ENCODE measurements at regions of chr12 and their contacts with region 1.

Region 1: GRCh38 chr12:108731105-108731865 is at the start of gene CORO1C:
- DNase-seq: peak; percentile 84 to 98
- H3K4me3 ChIP-seq: peak within 1 kb of the TSS; percentile 66 to 79
- H3K27ac ChIP-seq: peak within 1 kb of the TSS; percentile 94 to 96
- H3K4me1 ChIP-seq: peaks cover 0 to 30% of the 10 kb centered on the region in 2 donors
- H3K27me3 ChIP-seq: no peaks in the 10 kb centered on the region
- CTCF ChIP-seq: peak; percentile 82 to 94 (median 83)
- total RNA-seq, gene CORO1C: 106 TPM

Region 2: DNA sequence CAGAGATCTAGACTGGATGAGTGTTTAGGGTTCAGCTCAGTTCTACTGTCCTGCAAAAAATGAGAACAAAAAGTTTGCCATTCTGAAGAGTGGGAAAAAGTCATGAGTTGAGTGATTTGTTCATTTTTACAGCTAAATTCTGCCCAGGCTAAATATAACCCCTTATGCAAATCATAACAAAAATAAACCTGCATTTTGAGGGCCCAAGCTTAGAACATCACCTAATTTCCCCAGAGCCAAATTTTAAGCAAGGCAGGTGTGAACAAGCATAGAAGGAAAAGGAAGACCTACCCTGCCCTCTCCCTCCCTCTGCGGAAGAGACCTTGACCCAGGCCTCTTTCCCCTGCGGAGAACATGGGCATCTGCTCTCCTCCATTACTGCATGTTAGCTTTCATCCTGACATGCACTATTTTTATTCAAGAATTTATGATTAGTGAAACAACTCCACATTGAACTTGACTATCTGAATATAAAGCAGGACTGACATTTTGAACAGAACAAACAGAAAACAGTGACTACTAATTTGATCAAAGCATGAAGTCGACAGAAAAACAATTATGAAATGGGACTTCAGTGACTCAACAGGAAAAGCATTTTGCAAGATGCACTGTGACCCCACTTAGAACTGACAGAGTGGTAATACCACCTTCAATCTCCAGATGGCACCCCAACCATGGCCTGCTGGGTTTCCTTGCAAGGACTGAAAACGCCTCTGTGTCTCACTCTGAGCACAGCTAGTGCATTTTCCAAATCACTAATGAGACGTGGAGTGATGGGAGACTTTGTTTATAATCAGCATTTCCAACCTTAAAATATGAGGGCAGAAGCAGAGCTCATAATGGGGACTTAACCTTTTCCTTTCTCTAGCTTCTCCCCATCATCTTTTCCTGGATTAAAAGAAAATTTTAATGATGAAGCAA is 66.7 kb before region 1 on chr12:
- intact Hi-C with region 1: loop called (anchors 1 kb)
- DNase-seq: peak; percentile 41 to 96
- H3K4me3 ChIP-seq: peak overlapping the region in 1 of 2 donors; percentile 40
- H3K27ac ChIP-seq: peak overlapping the region; percentile 74 to 91
- H3K4me1 ChIP-seq: peaks cover 11 to 55% of the 10 kb centered on the region in 2 donors
- H3K27me3 ChIP-seq: no peaks in the 10 kb centered on the region
- CTCF ChIP-seq: peak; percentile 93 to 95 (median 95)

Region 3: GRCh38 chr12:108685469-108686260 is 45.6 kb before region 1 on chr12:
- intact Hi-C with region 1: no loop called
- DNase-seq: no peak
- H3K4me3 ChIP-seq: no peak overlapping the region
- H3K27ac ChIP-seq: peak overlapping the region; percentile 95 to 97
- H3K4me1 ChIP-seq: peaks cover 27 to 58% of the 10 kb centered on the region in 2 donors
- H3K27me3 ChIP-seq: no peaks in the 10 kb centered on the region
- CTCF ChIP-seq: no peak

Region 4: DNA sequence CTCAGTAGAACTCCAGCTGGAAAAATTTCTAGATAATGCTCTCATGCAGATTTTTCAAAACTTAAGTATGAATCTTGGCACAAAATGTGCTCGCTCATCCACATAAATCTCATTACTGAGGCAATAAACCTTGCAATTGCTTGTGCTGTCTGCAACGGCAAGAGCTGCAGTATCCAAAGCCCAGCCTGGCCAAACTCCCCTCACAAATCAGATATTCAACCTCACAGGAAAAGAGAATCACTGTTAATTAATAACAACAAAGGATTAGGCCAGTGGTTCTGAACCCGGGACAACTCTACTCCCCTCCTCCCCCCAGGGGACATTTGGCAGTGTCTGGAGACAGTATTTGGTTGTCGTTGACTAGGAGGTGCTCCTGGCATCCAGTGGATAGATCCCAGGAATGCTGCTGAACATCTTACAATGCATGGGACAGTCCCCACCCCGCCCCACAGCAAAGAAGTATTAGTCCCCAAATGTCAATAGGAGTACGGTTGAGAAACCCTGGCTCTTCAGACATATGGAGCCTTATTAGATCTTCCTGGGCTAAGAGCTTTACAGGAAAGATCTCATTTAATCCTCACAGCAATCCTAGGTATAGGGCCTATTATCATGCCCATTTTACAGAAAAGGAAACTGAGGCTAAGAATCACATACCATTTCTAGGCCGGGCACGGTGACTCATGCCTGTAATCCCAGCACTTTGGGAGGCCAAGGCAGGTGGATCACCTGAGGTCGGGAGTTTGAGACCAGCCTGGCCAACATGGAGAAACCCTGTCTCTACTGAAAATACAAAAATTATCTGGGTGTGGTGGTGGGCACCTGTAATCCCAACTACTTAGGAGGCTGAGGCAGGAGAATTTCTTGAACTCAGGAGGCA is 19.5 kb after region 1 on chr12:
- intact Hi-C with region 1: no loop called
- DNase-seq: peak in 1 of 2 donors; percentile 27
- H3K4me3 ChIP-seq: no peak overlapping the region
- H3K27ac ChIP-seq: no peak overlapping the region
- H3K4me1 ChIP-seq: no peaks in the 10 kb centered on the region
- H3K27me3 ChIP-seq: no peaks in the 10 kb centered on the region
- CTCF ChIP-seq: no peak

Region 5: DNA sequence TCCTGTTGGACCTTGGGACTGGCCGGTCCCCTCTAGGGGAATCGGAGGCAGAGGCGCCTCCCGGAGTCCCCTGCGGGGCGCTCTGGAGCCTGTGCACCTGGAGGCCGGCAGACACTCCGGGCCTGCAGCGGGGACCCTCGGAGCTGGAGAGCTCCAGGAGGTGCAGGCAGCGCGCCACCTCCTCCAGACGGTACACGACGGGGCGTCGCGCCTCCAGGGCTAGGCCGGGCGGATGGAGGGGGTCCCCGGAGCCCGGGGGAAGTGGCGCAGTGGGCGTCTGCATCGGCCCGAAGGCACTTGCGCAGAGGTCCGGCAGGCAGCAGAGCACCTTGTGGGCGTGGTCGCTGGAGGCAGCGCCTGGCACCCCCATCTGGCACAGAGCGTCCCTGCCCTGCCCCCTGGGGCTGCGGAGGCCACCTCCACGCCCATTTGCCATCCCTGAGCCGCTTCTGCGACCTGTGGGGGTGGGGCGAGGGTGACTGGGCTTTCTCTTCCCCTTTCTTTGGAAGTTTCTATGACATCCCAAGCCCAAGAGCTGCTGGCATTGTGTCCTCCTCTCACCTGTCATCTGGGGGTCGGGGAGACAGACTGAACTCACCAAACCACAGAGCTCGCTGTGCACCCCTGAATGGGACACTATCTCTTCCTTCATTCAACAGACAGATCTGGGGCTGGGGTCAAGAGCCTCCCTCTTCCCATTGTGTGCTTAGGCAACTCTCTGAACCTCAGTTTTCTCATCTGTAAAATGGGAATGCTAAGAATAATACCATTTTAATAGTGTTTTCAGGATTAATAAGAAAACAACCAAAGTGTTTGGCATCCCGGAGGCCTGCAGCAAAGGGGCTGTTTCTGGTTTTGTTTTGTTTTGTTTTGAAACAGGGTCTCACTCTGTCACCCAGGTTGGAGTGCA is 37.6 kb after region 1 on chr12:
- intact Hi-C with region 1: loop called (anchors 2 kb)
- DNase-seq: no peak
- H3K4me3 ChIP-seq: peak overlapping the region; percentile 45 to 60
- H3K27ac ChIP-seq: peak overlapping the region in 1 of 2 donors; percentile 19
- H3K4me1 ChIP-seq: peaks cover 0 to 23% of the 10 kb centered on the region in 2 donors
- H3K27me3 ChIP-seq: no peaks in the 10 kb centered on the region
- CTCF ChIP-seq: peak in 1 of 3 experiments; percentile 2

Region 6: GRCh38 chr12:108803428-108804105 is 72.3 kb after region 1 on chr12:
- intact Hi-C with region 1: loop called (anchors 1 kb)
- DNase-seq: peak in 1 of 2 donors; percentile 94
- H3K4me3 ChIP-seq: no peak overlapping the region
- H3K27ac ChIP-seq: peak overlapping the region; percentile 92 to 95
- H3K4me1 ChIP-seq: peaks cover 20 to 47% of the 10 kb centered on the region in 2 donors
- H3K27me3 ChIP-seq: no peaks in the 10 kb centered on the region
- CTCF ChIP-seq: peak; percentile 94 to 95 (median 94)

Region 7: GRCh38 chr12:108861878-108862587 is 130.7 kb after region 1 on chr12:
- intact Hi-C with region 1: no loop called
- DNase-seq: no peak
- H3K4me3 ChIP-seq: no peak overlapping the region
- H3K27ac ChIP-seq: no peak overlapping the region
- H3K4me1 ChIP-seq: peaks cover 0 to 10% of the 10 kb centered on the region in 2 donors
- H3K27me3 ChIP-seq: no peaks in the 10 kb centered on the region
- CTCF ChIP-seq: no peak

Region 8: GRCh38 chr12:108950991-108951739 is 219.9 kb after region 1 on chr12:
- intact Hi-C with region 1: loop called (anchors 10 kb)
- DNase-seq: peak in 1 of 2 donors; percentile 85
- H3K4me3 ChIP-seq: peak overlapping the region in 1 of 2 donors; percentile 34
- H3K27ac ChIP-seq: no peak overlapping the region
- H3K4me1 ChIP-seq: no peaks in the 10 kb centered on the region
- H3K27me3 ChIP-seq: no peaks in the 10 kb centered on the region
- CTCF ChIP-seq: peak; percentile 76 to 87 (median 87)